Dendritic cell treated with granulocyte-macrophage colony-stimulating factor and Interleukin-4, amounts not matched to agents 40 ng/mL and 50 ng/mL, for 4 days (primary cell): ENCODE measurements at regions of chrX and their contacts with region 1.

Region 1: GRCh38 chrX:71400710-71401109 is 34.6 kb downstream of the TAF1 start:
- H3K4me3 Mint-ChIP-seq: no peak overlapping the region
- H3K27ac Mint-ChIP-seq: no peak overlapping the region
- H3K4me1 Mint-ChIP-seq: no peaks in the 10 kb centered on the region
- H3K27me3 Mint-ChIP-seq: no peaks in the 10 kb centered on the region

Region 2: DNA sequence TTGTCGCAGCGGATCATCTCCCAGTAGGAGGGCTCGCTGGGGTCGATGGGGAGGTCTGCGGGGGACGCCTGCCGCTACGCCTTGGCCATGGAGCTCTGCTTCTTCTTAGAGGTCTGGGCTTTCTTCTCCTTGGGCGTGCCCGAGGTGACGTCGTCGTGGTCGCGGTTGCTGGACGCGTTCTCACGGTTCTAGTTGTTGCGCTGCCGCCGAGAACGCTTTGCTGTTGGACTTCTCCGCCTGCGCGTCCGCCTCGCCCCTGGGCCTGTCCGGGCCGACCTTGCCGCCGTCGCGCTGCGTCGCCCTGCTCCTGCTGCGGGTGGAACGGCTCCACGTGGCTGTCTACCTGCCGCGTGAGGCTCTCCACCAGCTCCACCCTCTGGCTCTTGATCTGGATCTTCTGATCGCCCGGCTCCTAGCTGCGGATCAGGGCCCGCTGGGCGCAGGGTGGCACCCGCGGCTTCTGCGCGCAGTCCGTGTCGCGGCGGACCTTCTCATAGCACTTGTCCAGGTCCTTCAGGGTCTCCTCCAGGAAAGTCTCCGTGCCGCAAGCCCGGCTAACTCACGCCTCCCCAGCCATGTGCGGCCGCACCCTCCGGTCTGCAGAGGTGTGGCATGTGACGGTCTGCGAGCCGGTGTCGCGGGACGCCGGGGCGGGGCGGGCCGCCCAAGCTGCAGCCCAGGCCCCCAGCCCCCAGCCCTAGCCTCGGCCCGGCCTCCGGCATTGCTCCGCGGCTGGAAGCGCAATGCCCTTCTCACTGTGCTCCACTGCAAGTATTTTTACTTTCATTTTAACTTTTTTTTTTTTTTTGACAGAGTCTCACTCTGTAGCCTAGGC is 91.7 kb after region 1 on chrX:
- intact Hi-C with region 1: no loop called
- H3K4me3 Mint-ChIP-seq: peak overlapping the region; percentile 80
- H3K27ac Mint-ChIP-seq: peak overlapping the region; percentile 81
- H3K4me1 Mint-ChIP-seq: peaks cover 17% of the 10 kb centered on the region
- H3K27me3 Mint-ChIP-seq: peaks cover 6% of the 10 kb centered on the region

Region 3: DNA sequence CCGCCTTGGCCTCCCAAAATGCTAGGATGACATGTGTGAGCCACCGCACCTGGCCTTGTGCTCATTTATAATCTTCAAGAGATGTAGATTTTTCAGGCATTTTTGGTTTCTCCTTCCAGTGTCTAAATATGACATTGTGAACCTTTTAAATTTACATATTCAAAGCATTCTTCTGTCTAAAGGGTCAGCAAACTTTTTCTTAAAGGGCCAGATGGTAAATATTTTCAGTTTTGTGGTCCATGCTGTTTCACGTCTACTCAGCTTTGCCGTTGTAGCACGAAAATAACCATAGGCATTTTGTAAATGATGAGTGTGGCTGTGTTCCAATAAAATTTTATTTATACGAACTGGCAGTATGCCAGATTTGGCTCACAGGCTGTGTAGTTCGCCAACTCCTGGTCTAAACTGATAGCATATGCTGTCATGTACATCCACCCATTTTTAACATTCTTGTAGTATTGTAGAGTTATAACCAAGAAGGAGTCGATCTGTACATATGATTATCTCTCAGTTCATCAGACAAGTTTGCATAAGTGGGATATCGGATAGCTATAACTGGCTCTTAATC is 164.8 kb after region 1 on chrX:
- intact Hi-C with region 1: loop called (anchors 10 kb)
- H3K4me3 Mint-ChIP-seq: no peak overlapping the region
- H3K27ac Mint-ChIP-seq: no peak overlapping the region
- H3K4me1 Mint-ChIP-seq: no peaks in the 10 kb centered on the region
- H3K27me3 Mint-ChIP-seq: no peaks in the 10 kb centered on the region